ENCODE measurements at regions of chr15 and their contacts with region 1.

Region 1: DNA sequence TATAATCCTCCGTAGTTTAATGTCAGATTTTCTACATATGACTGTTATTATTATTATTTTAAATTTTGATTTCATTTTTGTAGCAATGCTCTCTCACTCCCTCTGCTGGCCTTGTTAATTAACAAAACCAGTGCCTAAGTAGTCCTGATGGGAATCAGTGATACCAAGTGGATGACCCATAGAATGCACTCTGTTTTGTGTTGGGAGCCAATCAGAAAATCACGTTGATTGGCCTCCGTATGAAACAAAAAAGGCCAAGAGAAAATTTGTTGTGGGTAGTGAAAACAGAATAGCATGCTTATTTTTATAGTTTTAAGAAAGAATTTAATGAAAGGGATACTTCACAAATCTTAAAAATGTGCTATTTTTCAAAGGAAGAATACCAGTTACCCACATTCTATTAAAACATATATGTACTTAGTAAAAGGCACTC is 34.4 kb upstream of the MEIS2 start:
- DNase-seq: no peak
- ATAC-seq: peak; percentile 75 to 86
- H3K4me3 ChIP-seq: no peak overlapping the region
- H3K27ac ChIP-seq: no peak overlapping the region
- H3K4me1 ChIP-seq: no peaks in the 10 kb centered on the region
- H3K27me3 ChIP-seq: peaks cover 5% of the 10 kb centered on the region
- CTCF ChIP-seq: peak; percentile 75

Region 2: GRCh38 chr15:36883713-36884517 is 250.8 kb before region 1 on chr15:
- intact Hi-C with region 1: loop called (anchors 10 kb)
- DNase-seq: peak; percentile 86
- ATAC-seq: peak; percentile 89 to 94
- H3K4me3 ChIP-seq: peak overlapping the region; percentile 31
- H3K27ac ChIP-seq: no peak overlapping the region
- H3K4me1 ChIP-seq: peaks cover 17% of the 10 kb centered on the region
- H3K27me3 ChIP-seq: peaks cover 98% of the 10 kb centered on the region
- CTCF ChIP-seq: peak; percentile 85

Region 3: DNA sequence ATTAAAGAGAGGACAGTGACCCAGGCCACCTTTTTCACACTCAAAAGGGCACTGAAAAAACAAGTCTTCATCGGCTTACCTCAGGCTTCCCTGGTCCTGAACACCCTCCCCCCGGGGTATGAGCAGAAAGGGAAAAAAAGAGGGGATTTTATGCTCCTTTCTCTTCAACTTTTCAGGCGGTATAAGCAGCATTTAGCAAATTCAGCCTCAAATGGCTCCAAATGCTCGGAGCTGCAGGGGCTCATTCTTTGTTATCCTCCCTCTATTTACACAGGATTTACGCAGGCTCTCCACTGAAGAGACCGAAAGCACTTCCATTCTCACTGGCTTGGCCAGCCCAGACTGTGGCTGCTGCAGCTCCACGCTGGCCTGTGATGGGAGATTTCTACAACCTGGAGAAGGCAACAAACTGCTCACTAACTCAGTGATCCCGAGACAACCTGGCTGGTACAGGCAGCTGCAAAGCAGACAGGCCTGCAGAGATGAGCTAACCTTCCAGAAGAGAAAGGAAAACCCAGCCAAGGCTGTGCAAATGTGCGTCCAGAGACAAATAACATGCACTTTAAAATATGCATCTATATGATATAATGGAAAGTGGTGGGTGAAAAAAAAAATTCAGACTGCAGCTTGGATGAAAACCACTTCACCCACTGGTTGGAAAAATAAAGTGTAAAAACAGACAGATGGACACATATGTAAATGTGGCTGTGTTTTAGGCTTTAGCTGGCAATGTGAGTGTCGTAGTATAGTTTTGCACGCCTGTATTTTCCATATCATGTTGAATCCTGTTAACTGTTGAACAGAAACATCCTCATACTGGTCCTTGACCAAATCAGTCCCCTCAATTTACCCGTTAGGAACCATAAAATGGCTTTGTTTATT is 88.6 kb before region 1 on chr15:
- intact Hi-C with region 1: no loop called
- DNase-seq: peak; percentile 48
- ATAC-seq: peak; percentile 84 to 93
- H3K4me3 ChIP-seq: no peak overlapping the region
- H3K27ac ChIP-seq: peak overlapping the region; percentile 7
- H3K4me1 ChIP-seq: peaks cover 9% of the 10 kb centered on the region
- H3K27me3 ChIP-seq: no peaks in the 10 kb centered on the region
- CTCF ChIP-seq: no peak

Region 4: GRCh38 chr15:37416103-37416502 is 281.4 kb after region 1 on chr15:
- intact Hi-C with region 1: no loop called
- DNase-seq: no peak
- ATAC-seq: no peak
- H3K4me3 ChIP-seq: no peak overlapping the region
- H3K27ac ChIP-seq: no peak overlapping the region
- H3K4me1 ChIP-seq: no peaks in the 10 kb centered on the region
- H3K27me3 ChIP-seq: no peaks in the 10 kb centered on the region
- CTCF ChIP-seq: no peak

Measured in lower lobe of right lung (tissue), 2 donors.